ENCODE measurements at regions of chr6 and their contacts with region 1.

Region 1: GRCh38 chr6:116371120-116371917 is 572 bp downstream of the DSE start:
- DNase-seq: no peak
- H3K4me3 Mint-ChIP-seq: peak overlapping the region; percentile 72
- H3K27ac Mint-ChIP-seq: no peak overlapping the region
- H3K4me1 Mint-ChIP-seq: peaks cover 10% of the 10 kb centered on the region
- H3K27me3 Mint-ChIP-seq: peaks cover 61% of the 10 kb centered on the region

Region 2: GRCh38 chr6:116246089-116246488 is 125.2 kb before region 1 on chr6:
- intact Hi-C with region 1: no loop called
- DNase-seq: no peak
- H3K4me3 Mint-ChIP-seq: no peak overlapping the region
- H3K27ac Mint-ChIP-seq: no peak overlapping the region
- H3K4me1 Mint-ChIP-seq: peaks cover 18% of the 10 kb centered on the region
- H3K27me3 Mint-ChIP-seq: no peaks in the 10 kb centered on the region

Region 3: GRCh38 chr6:116287689-116288282 is 83.5 kb before region 1 on chr6:
- intact Hi-C with region 1: loop called (anchors 5 kb)
- DNase-seq: no peak
- H3K4me3 Mint-ChIP-seq: no peak overlapping the region
- H3K27ac Mint-ChIP-seq: no peak overlapping the region
- H3K4me1 Mint-ChIP-seq: no peaks in the 10 kb centered on the region
- H3K27me3 Mint-ChIP-seq: no peaks in the 10 kb centered on the region

Region 4: DNA sequence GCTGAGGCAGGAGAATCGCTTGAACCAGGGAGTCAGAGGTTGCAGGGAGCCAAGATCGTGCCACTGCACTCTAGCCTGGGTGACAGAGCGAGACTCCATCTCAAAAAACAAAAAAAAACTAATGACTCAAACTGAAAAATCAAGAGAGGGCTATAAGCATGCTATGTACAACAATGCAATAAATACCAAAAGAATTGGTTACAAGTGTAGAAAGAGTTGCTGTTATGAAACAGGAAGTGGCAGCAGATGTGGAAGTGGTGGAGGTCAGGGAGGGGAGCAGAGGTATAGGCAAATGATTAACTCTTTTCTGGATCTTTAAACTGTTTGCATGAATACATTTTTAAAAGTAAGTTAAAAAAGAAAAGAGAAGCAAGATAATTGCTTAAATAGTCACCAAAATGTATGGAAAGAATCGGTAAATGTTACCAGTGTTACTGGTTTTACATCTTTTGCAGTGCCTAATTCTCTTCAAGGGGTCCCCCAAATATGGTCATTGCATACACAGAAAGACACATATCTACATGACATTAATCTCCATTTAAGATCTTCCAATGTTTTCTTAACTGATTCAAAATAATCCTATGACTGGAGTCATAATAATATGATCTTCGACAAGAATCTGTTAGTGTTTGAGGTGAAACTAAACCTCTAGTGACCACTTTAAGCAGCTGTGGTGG is 104.8 kb after region 1 on chr6:
- intact Hi-C with region 1: loop called (anchors 5 kb)
- DNase-seq: peak; percentile 54
- H3K4me3 Mint-ChIP-seq: peak overlapping the region; percentile 20
- H3K27ac Mint-ChIP-seq: peak overlapping the region; percentile 4
- H3K4me1 Mint-ChIP-seq: peaks cover 26% of the 10 kb centered on the region
- H3K27me3 Mint-ChIP-seq: peaks cover 40% of the 10 kb centered on the region

Region 5: DNA sequence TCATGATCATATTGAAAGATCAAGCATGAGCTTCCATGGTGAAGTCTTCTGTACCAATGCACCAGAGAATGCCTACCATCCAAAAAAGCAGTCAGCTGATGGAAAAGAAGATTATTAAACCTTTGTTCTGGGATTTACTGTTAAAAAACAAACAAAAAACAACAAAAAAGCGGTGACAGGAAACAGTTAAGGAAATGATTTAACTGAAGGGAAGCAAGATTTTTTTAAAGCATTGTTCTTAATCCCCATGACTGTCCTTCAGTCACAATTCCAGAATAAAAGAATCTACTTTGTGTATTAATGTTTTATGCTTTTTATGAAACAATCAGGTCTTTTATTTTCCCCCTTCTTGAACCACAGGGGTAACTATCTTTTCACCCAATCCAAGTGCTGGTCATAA is 370.3 kb after region 1 on chr6:
- intact Hi-C with region 1: no loop called
- DNase-seq: no peak
- H3K4me3 Mint-ChIP-seq: no peak overlapping the region
- H3K27ac Mint-ChIP-seq: no peak overlapping the region
- H3K4me1 Mint-ChIP-seq: no peaks in the 10 kb centered on the region
- H3K27me3 Mint-ChIP-seq: peaks cover 2% of the 10 kb centered on the region

Measured in activated T-helper 2 cell treated with anti-CD3 and anti-CD28 coated beads, Interferon-gamma antibody, Interleukin-2, Interleukin-4, amounts not matched to agents 10 μg/mL and 5 μg/mL and 100 μg/mL, durations not matched to agents 14 hours and 24 hours and 36 hours (primary cell).